H1 (cell line): ENCODE measurements at regions of chr19 and their contacts with region 1.

Region 1: GRCh38 chr19:1672038-1672768 is 19.8 kb upstream of the TCF3 start:
- DNase-seq: peak in 1 of 2 experiments; percentile 81
- H3K4me3 ChIP-seq: peak overlapping the region in 3 of 4 experiments; percentile 5 to 60 (median 6); a peak in 4 of 8 replicates
- H3K27ac ChIP-seq: no peak overlapping the region
- H3K4me1 ChIP-seq: peaks cover 0 to 16% (median 10%) of the 10 kb centered on the region in 4 experiments; a peak in 6 of 7 replicates
- H3K27me3 ChIP-seq: peaks cover 34 to 91% (median 80%) of the 10 kb centered on the region in 4 experiments
- CTCF ChIP-seq: peak; percentile 47 to 82 (median 80)
- EP300 ChIP-seq: no peak
- POLR2A ChIP-seq: no peak
- RAD21 ChIP-seq: peak; percentile 79 to 85

Region 2: GRCh38 chr19:1540365-1540925 is 131.8 kb before region 1 on chr19:
- CTCF ChIA-PET with region 1: interaction called, 13 read pairs
- POLR2A ChIA-PET with region 1: no interaction called
- DNase-seq: no peak
- H3K4me3 ChIP-seq: no peak overlapping the region
- H3K27ac ChIP-seq: no peak overlapping the region
- H3K4me1 ChIP-seq: no peaks in the 10 kb centered on the region; a peak in 1 of 7 replicates
- H3K27me3 ChIP-seq: no peaks in the 10 kb centered on the region
- CTCF ChIP-seq: no peak
- EP300 ChIP-seq: no peak
- POLR2A ChIP-seq: no peak
- RAD21 ChIP-seq: no peak

Region 3: DNA sequence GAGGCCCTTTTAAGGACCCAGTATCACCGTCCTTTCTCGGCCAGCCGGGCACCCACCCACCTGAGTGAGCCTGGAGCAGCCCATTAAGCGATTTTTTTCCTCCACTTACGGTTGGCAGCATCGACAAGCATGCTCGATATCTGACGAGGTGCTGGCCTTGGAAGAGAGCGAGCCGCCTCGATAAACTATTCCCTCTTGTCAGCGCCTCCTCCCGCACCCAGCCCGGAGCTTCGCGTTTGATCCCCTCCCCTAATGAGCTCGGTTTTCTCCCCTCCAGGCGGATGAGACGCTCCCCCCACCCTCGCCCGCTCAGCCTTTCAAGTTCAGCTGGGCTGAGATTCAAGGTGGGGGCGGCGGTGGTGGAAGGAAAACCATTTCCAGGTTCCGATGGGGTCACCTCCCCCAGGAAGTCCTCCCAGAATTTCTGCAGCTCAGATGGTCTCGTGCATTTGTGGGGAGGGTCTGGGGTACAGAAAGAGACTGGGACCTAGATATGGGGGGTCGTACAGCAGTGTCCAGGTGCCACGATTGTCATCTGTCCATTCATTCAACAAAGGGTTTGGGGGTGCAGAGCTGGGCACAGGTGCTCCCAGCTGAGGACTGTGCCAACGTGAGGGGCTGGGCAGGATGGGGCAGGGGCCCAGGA is 62.2 kb after region 1 on chr19:
- CTCF ChIA-PET with region 1: interaction called, 18 read pairs
- POLR2A ChIA-PET with region 1: no interaction called
- DNase-seq: no peak
- H3K4me3 ChIP-seq: no peak overlapping the region
- H3K27ac ChIP-seq: no peak overlapping the region
- H3K4me1 ChIP-seq: 0 out of 7 replicates have a peak, but pooled peaks cover 0 to 2% (median 0%) of the 10 kb centered on the region in 4 experiments
- H3K27me3 ChIP-seq: peaks cover 0 to 11% (median 2%) of the 10 kb centered on the region in 4 experiments; a peak in 4 of 7 replicates
- CTCF ChIP-seq: no peak
- EP300 ChIP-seq: no peak
- POLR2A ChIP-seq: no peak
- RAD21 ChIP-seq: no peak

Region 4: GRCh38 chr19:1754616-1755466 is 82.6 kb after region 1 on chr19:
- CTCF ChIA-PET with region 1: interaction called, 22 read pairs
- POLR2A ChIA-PET with region 1: interaction called, 5 read pairs
- DNase-seq: peak in 1 of 2 experiments; percentile 73
- H3K4me3 ChIP-seq: peak overlapping the region in 2 of 4 experiments; percentile 19 to 43; a peak in 3 of 8 replicates
- H3K27ac ChIP-seq: no peak overlapping the region
- H3K4me1 ChIP-seq: peaks cover 0 to 38% (median 14%) of the 10 kb centered on the region in 4 experiments; a peak in 6 of 7 replicates
- H3K27me3 ChIP-seq: peaks cover 98 to 100% (median 99%) of the 10 kb centered on the region in 4 experiments
- CTCF ChIP-seq: no peak
- EP300 ChIP-seq: no peak
- POLR2A ChIP-seq: no peak
- RAD21 ChIP-seq: no peak

Region 5: DNA sequence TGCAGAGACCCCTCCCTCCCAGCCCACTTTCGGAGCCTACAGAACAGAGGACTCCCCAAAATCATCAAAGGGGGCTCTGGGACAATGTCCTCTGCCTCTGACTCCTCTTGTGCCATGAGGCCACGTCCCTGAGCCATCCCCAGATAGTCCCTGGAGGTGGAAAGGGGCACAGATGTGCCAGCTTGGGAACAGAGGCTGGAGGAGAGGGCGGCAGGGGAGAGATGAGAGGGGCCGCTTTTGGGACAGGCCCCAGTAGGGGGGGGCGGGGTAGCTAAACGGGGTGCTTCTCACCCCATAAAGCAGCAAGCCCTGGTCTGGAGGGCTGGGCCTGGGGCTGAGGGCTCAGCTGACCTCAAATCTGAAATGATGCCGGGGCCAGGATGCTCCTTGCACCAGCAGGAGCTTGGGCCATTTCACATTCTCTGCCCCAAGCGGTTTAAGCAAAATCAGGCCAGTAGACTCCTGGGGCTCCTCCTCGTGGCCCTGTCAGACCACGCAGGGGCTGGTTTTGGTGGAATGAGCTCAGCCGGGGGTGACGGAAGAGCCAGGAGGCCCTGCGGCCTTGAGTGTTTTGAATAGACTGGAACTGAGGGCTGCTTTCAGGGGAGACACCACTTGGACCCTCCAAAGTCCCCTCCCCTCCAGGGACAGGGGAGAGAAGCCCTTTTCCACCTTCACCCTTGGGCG is 108.2 kb after region 1 on chr19:
- CTCF ChIA-PET with region 1: interaction called, 11 read pairs
- POLR2A ChIA-PET with region 1: interaction called, 3 read pairs
- DNase-seq: no peak
- H3K4me3 ChIP-seq: no peak overlapping the region
- H3K27ac ChIP-seq: no peak overlapping the region
- H3K4me1 ChIP-seq: peaks cover 0 to 5% (median 2%) of the 10 kb centered on the region in 4 experiments; a peak in 3 of 7 replicates
- H3K27me3 ChIP-seq: peaks cover 22 to 57% (median 55%) of the 10 kb centered on the region in 4 experiments
- CTCF ChIP-seq: peak in 2 of 3 experiments; percentile 6 to 42; a peak in 3 of 4 replicates
- EP300 ChIP-seq: no peak
- POLR2A ChIP-seq: no peak
- RAD21 ChIP-seq: no peak